Vagina (tissue), 2 donors: ENCODE measurements at regions of chr4 and their contacts with region 1.

Region 1: DNA sequence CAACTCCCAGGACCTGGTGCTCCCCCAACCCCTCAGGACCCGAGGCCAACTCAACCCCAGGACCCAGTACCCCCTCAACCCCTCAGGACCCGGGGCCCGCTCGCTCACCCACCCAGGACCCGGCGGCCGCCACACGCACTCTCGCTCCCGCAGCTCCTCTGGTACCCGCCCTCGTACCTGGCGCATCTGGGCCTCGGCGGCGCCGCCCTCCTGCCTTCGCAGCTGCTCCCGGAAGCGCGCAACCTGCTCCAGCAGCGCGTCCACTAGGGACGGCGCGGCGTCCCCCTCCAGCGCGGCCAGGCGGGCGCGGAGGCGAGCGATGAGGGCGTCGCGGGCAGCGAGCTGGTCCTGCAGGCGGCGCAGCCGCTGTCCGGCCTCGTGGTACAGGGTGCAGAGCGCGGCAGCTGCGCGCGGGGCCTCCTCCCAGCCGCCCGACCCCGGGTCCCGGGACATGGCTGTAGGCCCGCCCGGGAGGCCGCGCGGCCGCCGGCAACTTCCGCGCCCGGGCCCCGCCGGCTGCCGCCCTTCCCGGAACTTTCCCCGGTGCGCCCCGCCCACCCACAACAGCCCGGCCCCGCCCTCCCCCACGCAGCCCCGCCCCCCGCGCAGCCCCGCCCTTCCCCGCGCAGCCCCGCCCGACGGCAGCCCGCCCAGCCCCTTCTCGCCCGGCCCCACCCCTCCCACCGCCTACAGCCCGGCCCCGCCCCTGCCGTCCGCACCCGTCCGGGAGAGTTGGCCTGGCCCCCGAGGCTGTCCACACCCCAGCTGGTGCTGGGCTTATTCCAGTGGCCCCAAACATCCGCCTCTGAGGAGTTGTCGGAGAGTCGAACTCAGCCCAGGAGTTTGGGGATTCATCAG is at the start of gene TNIP2:
- DNase-seq: peak in 1 of 2 donors; percentile 91
- H3K4me3 ChIP-seq: peak within 1 kb of the TSS; percentile 67 to 89
- H3K27ac ChIP-seq: peak within 1 kb of the TSS; percentile 63
- H3K4me1 ChIP-seq: peaks cover 38% of the 10 kb centered on the region
- H3K27me3 ChIP-seq: no peaks in the 10 kb centered on the region
- CTCF ChIP-seq: peak in 2 of 3 experiments; percentile 13 to 23
- POLR2A ChIP-seq: peak in 1 of 2 donors; percentile 59
- total RNA-seq, gene TNIP2: 57.0 TPM

Region 2: DNA sequence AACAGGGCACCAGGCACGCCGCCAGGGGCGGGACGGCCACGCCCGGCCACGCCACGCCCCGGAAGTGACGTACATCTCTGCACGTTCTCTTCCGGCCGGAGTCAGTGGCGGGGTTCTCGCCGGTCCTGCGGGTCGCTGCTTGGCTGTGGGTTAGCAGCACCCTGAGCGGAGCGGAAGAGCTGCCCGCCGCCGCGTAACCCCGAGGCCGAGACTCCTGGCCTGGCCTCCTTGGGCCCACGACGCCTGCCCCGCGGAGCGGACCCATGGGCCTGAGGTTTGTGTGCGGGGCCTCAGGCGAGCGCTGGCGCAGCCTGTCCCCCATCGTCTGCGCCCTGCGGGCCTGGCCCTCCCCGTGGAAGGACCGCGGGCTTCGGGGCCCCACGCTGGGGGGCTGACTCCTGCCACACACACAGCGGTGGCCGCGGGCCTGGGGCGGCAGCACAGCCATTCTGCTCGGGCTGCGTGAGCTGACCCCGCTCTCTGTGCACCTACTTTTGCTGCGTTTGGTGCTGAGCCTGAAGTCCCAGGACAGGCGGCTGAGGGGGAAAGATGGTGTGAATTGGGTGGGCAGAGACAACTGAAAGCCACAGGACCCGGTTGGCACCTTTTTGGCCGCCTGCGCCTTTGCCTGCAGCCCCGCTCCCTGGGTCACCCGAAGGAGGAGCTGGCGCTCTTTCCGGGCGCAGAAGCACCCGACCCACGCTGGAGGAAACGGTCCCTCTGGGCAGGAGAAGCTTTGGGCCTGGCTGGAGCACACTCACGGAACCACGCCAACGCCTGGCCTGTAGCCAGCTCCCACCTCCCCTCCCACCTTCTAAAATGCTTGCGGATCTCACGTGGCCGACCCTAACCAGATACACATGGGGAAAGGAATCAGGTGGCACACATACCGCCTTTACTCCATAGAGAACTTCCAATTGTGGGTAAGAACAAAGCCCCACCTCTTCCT is 179.0 kb after region 1 on chr4:
- intact Hi-C with region 1: loop called (anchors 10 kb)
- DNase-seq: peak in 1 of 2 donors; percentile 90
- H3K4me3 ChIP-seq: peak overlapping the region; percentile 81 to 93
- H3K27ac ChIP-seq: peak overlapping the region; percentile 87
- H3K4me1 ChIP-seq: peaks cover 46% of the 10 kb centered on the region
- H3K27me3 ChIP-seq: no peaks in the 10 kb centered on the region
- CTCF ChIP-seq: no peak
- POLR2A ChIP-seq: peak in 1 of 2 donors; percentile 94